Activated CD4-positive, alpha-beta T cell treated with anti-CD3 and anti-CD28 coated beads for 36 hours (primary cell): ENCODE measurements at regions of chr1 and their contacts with region 1.

Region 1: DNA sequence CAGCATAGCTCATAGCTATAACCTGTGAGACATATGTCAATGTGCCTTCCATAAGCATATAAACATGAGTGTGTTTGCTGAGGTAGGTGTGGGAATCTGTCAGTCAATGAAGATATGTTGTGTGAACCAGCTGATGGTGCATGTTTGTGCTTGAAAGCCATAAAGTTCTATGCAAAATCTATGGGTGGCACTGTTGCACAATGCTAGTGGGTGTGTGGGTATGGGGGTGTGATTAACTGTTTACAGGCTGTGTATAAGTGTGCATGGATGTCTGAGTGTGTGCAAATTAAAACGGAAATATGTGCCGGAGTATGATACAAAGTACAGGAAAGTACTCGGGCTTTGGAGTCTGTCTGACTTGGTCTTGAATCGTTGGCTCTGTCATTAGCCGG is 1.0 kb upstream of the ATP2B4 start:
- DNase-seq: peak; percentile 75
- ATAC-seq: peak; percentile 30
- H3K4me3 Mint-ChIP-seq: peak overlapping the region; percentile 85
- H3K27ac Mint-ChIP-seq: peak overlapping the region; percentile 95
- H3K4me1 Mint-ChIP-seq: peaks cover 64% of the 10 kb centered on the region
- H3K27me3 Mint-ChIP-seq: no peaks in the 10 kb centered on the region

Region 2: GRCh38 chr1:203006948-203007871 is 618.4 kb before region 1 on chr1 and contains the start of gene TMEM183A:
- CTCF ChIA-PET with region 1: no interaction called
- POLR2A ChIA-PET with region 1: no interaction called
- intact Hi-C with region 1: no loop called
- DNase-seq: peak; percentile 98
- ATAC-seq: peak; percentile 96
- H3K4me3 Mint-ChIP-seq: peak within 1 kb of the TSS; percentile 99
- H3K27ac Mint-ChIP-seq: peak within 1 kb of the TSS; percentile 98
- H3K4me1 Mint-ChIP-seq: peaks cover 23% of the 10 kb centered on the region
- H3K27me3 Mint-ChIP-seq: no peaks in the 10 kb centered on the region
- total RNA-seq, gene TMEM183A: 68.6 to 71.0 TPM

Region 3: DNA sequence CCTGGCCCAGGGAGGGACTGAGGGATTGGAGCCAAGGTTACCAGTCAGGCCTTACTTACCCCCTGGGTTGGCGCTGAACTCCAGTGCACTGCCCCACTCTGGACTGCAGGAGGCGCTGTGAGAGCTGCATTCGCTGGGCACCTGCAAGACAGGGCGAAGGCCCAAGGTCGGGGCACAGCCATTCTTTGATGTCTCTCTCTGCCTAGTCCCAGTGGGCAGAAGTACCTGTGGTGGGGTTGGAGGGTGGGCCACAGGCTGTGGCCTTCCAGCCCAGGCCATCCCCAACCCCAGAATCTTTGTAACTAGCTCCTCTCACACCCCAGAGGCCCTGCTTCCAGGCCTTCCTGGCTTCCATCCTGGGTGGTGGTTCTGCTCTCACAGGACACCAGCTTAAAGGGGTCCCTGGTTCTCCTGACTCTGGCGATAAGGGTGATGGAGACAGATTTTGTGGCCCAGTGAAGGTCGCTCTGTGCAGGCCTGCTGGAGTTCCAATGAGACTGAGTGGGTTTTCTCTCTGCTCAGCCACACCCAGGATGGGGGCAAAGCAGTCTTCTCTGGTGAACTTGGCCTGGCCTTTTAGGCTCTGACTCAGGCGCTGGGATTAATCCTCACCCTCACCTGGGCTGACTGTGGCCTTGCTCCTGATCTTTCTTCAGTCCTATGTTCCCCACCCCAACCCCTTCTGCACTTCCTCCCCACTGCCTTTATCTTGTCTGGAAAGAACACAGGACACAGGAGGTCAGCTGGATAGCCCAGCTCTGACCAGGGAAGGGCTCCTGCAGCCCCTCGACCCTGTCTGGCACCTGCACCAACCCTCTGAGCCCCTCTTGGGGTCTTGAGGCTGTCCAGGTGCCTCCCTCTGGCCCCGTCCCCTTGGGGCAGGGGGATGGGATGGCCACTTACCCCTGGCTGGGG is 540.8 kb before region 1 on chr1:
- CTCF ChIA-PET with region 1: no interaction called
- POLR2A ChIA-PET with region 1: no interaction called
- intact Hi-C with region 1: no loop called
- DNase-seq: peak; percentile 71
- ATAC-seq: peak; percentile 68
- H3K4me3 Mint-ChIP-seq: no peak overlapping the region
- H3K27ac Mint-ChIP-seq: no peak overlapping the region
- H3K4me1 Mint-ChIP-seq: no peaks in the 10 kb centered on the region
- H3K27me3 Mint-ChIP-seq: peaks cover 2% of the 10 kb centered on the region

Region 4: GRCh38 chr1:203290261-203291089 is 335.1 kb before region 1 on chr1:
- CTCF ChIA-PET with region 1: no interaction called
- POLR2A ChIA-PET with region 1: interaction called, 7 read pairs
- intact Hi-C with region 1: loop called in 1 of 2 experiments (anchors 5 kb)
- DNase-seq: peak; percentile 99
- ATAC-seq: peak; percentile 50
- H3K4me3 Mint-ChIP-seq: peak overlapping the region; percentile 78
- H3K27ac Mint-ChIP-seq: peak overlapping the region; percentile 98
- H3K4me1 Mint-ChIP-seq: peaks cover 83% of the 10 kb centered on the region
- H3K27me3 Mint-ChIP-seq: no peaks in the 10 kb centered on the region

Region 5: GRCh38 chr1:203402629-203403337 is 222.8 kb before region 1 on chr1:
- CTCF ChIA-PET with region 1: no interaction called
- POLR2A ChIA-PET with region 1: no interaction called
- intact Hi-C with region 1: no loop called
- DNase-seq: no peak
- ATAC-seq: no peak
- H3K4me3 Mint-ChIP-seq: no peak overlapping the region
- H3K27ac Mint-ChIP-seq: no peak overlapping the region
- H3K4me1 Mint-ChIP-seq: no peaks in the 10 kb centered on the region
- H3K27me3 Mint-ChIP-seq: peaks cover 6% of the 10 kb centered on the region

Region 6: GRCh38 chr1:203504397-203505250 is 121.0 kb before region 1 on chr1:
- CTCF ChIA-PET with region 1: interaction called, 13 read pairs
- POLR2A ChIA-PET with region 1: no interaction called
- intact Hi-C with region 1: loop called (anchors 2 kb)
- DNase-seq: peak; percentile 83
- ATAC-seq: peak; percentile 75
- H3K4me3 Mint-ChIP-seq: no peak overlapping the region
- H3K27ac Mint-ChIP-seq: no peak overlapping the region
- H3K4me1 Mint-ChIP-seq: peaks cover 4% of the 10 kb centered on the region
- H3K27me3 Mint-ChIP-seq: peaks cover 2% of the 10 kb centered on the region

Region 7: DNA sequence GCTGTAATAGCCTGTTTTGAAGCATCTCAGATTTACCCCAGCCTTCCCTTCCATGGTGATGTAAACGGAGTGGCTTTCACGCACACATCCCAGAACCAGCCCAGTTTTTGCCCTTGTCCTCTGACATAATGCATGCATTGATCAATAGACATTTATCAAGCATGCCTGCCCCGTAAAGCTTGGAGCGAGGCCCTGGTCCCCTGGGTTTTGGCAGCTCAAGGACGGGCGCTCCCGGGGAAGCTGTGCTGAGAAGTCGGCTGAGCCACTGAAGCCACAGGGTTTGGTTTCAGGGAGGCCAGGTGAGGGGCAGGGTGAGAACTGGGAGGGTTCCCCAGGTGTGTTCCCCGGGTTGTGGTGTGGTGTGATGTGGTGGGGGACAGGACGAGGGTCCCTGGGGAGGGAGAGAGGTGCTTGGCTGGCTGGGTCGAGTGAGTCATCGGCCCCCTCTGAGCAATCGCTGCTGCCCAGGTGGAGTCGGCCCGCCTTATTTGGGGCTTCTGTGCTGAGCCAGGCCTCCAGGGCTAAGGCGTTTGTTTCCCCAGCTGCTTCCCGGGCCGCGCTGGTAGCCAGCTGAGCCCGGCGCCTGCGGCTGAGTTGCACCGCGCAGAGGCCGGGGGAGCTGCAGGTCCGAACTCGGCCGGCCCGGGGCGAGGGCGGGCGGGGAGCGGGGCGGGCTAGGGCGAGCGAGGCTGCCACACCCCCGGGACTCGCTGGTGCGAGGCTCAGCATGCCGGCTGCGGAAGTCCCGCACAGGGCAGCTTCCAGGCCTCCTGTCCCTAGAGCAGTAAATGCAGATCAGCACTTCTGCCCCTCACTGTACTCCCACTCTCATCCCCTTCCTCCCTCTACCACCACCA is 24.6 kb after region 1 on chr1:
- CTCF ChIA-PET with region 1: interaction called, 54 read pairs
- POLR2A ChIA-PET with region 1: interaction called, 50 read pairs
- intact Hi-C with region 1: loop called (anchors 1 kb)
- DNase-seq: peak; percentile 81
- ATAC-seq: peak; percentile 43
- H3K4me3 Mint-ChIP-seq: peak overlapping the region; percentile 59
- H3K27ac Mint-ChIP-seq: peak overlapping the region; percentile 89
- H3K4me1 Mint-ChIP-seq: peaks cover 74% of the 10 kb centered on the region
- H3K27me3 Mint-ChIP-seq: no peaks in the 10 kb centered on the region

Region 8: DNA sequence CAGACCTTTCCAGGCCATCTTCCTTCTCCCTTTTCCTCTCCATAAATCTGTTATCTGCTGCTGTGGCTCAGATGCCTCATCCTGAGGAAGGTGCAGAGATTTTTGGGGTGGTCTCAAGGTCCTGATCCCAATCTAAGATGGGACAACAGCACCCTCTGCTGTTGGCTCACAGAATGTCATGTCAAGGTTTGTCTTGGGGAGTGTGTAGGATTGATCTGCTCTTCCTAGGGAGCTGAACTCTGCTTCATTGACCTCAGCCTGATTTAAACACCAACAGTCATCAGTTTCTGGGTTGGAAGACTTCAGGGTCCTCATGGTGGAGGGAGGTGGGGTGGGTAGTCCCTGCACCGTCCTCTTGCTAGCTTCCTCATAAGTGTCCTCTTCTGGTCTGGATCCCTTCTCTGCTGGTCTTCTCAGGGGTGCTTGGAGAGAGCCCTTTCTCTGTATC is 76.5 kb after region 1 on chr1:
- CTCF ChIA-PET with region 1: interaction called, 38 read pairs
- POLR2A ChIA-PET with region 1: interaction called, 5 read pairs
- intact Hi-C with region 1: loop called (anchors 1 kb)
- DNase-seq: peak; percentile 75
- ATAC-seq: peak; percentile 79
- H3K4me3 Mint-ChIP-seq: no peak overlapping the region
- H3K27ac Mint-ChIP-seq: peak overlapping the region; percentile 76
- H3K4me1 Mint-ChIP-seq: peaks cover 2% of the 10 kb centered on the region
- H3K27me3 Mint-ChIP-seq: no peaks in the 10 kb centered on the region

Region 9: DNA sequence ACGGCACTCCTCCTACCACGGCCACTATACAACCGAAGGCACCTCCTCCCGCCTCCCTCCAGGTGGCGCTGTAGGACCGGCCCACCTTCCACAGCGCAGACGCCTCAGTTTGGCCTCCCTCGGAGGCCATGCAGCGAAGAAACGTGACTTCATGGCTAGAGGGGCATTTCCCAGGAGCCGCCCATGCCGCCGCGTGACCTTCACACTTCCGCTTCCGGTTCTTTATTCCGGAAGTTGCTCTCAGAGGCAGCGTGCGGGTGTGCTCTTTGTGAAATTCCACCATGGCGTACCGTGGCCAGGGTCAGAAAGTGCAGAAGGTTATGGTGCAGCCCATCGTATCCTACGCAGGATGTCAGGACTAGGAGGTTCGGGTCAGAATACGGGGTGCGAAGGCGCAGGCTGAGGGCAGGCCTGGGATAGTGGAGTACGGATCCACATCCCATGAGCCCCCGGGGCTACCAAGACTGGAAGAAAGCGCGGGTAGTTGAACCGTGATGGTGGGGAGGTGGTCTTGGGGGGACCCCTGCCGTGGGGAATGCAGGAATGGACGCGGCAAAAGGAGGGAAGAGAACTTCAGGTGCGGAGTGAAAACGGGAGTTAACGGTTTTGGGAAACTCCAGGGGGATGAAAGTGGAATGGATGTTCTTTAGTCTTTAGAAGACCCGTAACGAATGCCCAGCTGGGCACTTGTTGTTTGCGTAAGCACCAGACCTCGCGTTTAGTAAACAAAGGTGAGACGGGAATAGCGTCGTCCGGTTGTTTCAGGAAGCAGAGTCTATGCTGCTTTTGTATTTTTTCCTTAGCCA is 236.0 kb after region 1 on chr1 and contains the start of gene SNRPE:
- CTCF ChIA-PET with region 1: interaction called, 3 read pairs
- POLR2A ChIA-PET with region 1: no interaction called
- intact Hi-C with region 1: loop called in 1 of 2 experiments (anchors 2 kb)
- DNase-seq: peak; percentile 98
- ATAC-seq: peak; percentile 98
- H3K4me3 Mint-ChIP-seq: peak within 1 kb of the TSS; percentile 100
- H3K27ac Mint-ChIP-seq: peak within 1 kb of the TSS; percentile 99
- H3K4me1 Mint-ChIP-seq: peaks cover 8% of the 10 kb centered on the region
- H3K27me3 Mint-ChIP-seq: no peaks in the 10 kb centered on the region
- total RNA-seq, gene SNRPE: 211 to 416 TPM

Region 10: DNA sequence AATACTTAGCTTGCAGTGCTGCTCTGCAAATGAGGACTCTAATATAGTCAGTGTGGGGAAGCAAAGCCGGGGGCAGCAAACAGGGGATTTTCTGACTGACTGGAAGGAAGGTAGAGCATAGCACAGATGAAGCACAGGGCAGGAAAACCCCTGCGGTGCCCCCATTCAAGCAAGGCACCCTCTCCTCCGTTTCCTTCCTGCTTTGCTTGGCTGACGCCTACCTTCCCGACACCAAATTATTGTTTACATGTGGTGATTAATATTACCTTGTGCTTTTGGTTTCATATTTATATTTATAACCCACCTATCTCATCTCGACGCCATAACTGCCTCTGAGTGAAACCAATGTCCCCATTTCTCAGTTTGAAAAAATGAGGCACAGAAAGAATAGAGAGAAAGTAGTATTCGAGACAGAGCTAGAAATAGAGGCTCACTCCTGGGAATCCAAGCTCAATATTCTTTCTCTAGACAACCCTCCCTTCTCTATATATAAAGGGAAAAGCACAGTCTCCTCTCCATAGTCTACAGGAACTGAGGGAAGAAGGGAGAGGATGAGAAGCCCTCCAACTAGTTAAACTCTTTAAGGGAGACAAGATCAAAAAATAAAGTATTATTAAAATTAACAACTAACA is 827.6 kb after region 1 on chr1:
- CTCF ChIA-PET with region 1: no interaction called
- POLR2A ChIA-PET with region 1: no interaction called
- intact Hi-C with region 1: no loop called
- DNase-seq: peak; percentile 86
- ATAC-seq: peak; percentile 96
- H3K4me3 Mint-ChIP-seq: peak overlapping the region; percentile 22
- H3K27ac Mint-ChIP-seq: peak overlapping the region; percentile 95
- H3K4me1 Mint-ChIP-seq: peaks cover 37% of the 10 kb centered on the region
- H3K27me3 Mint-ChIP-seq: no peaks in the 10 kb centered on the region